ENCODE measurements at regions of chr20 and their contacts with region 1.

Region 1: GRCh38 chr20:39874049-39874888 is 814.8 kb downstream of the MAFB start:
- DNase-seq: peak; percentile 65
- CTCF ChIP-seq: peak; percentile 82

Region 2: GRCh38 chr20:39112178-39112743 is 762.0 kb before region 1 on chr20:
- CTCF ChIA-PET with region 1: interaction called, 12 read pairs
- POLR2A ChIA-PET with region 1: no interaction called
- DNase-seq: peak; percentile 77
- CTCF ChIP-seq: peak; percentile 57

Region 3: GRCh38 chr20:39270837-39271604 is 603.2 kb before region 1 on chr20:
- CTCF ChIA-PET with region 1: interaction called, 72 read pairs
- POLR2A ChIA-PET with region 1: no interaction called
- DNase-seq: no peak
- CTCF ChIP-seq: no peak

Region 4: GRCh38 chr20:39676857-39677391 is 197.3 kb before region 1 on chr20:
- CTCF ChIA-PET with region 1: interaction called, 37 read pairs
- POLR2A ChIA-PET with region 1: no interaction called
- DNase-seq: peak; percentile 28
- CTCF ChIP-seq: peak; percentile 21

Region 5: DNA sequence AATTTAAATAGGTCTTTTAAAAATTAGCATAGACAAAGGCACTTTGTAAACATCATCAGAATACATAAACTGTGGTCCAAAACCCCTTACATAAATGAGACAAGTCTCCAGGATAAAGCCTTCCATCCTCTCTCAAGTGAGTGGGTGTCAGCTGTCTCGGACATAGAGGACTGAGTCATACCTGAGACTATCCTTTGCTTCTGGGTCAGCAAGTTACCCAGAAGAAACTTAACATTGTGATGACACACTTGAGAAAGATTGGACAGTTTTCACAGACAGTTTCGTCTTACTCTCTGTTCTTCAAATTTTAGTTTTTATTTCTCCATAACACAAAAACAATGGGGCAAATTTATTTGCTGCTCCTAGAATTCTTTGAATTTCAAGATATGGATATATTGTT is 74.2 kb before region 1 on chr20:
- CTCF ChIA-PET with region 1: no interaction called
- POLR2A ChIA-PET with region 1: no interaction called
- DNase-seq: peak; percentile 42
- CTCF ChIP-seq: no peak

Region 6: GRCh38 chr20:39855799-39856198 is 18.5 kb before region 1 on chr20:
- CTCF ChIA-PET with region 1: interaction called, 31 read pairs
- POLR2A ChIA-PET with region 1: no interaction called
- DNase-seq: no peak
- CTCF ChIP-seq: no peak

Region 7: DNA sequence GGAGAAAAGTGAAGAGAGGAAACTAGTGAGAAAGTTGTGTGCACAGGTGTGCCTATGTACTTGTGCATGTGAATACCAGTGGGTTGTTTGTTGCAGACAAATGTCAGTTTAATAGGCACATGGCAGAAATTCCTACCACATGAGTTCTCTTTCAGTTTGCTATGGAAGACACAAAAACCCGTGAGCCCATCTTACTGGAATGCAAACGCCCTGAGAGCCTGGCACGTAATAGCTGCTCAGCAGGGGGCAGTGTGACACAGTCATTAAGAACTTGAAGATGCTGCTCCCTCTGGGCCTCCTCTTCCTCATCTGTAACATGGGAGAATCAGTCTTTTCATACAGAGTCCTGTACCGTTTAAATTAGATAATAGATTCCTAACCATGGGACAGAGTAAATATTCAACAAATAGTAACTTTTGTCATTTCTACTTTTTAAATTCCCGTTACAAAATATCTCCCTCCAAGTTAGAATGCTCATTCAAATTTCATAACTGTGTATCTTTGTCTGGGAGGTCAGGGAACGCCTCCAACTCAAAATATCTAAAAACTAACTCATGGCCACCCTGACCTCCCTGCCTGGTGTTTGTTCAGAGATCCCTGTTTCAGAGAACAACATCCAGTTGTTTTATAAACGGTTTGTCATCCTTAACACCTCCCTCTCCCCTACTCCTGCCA is 11.8 kb after region 1 on chr20:
- CTCF ChIA-PET with region 1: interaction called, 19 read pairs
- POLR2A ChIA-PET with region 1: no interaction called
- DNase-seq: peak; percentile 34
- CTCF ChIP-seq: peak; percentile 60

Region 8: DNA sequence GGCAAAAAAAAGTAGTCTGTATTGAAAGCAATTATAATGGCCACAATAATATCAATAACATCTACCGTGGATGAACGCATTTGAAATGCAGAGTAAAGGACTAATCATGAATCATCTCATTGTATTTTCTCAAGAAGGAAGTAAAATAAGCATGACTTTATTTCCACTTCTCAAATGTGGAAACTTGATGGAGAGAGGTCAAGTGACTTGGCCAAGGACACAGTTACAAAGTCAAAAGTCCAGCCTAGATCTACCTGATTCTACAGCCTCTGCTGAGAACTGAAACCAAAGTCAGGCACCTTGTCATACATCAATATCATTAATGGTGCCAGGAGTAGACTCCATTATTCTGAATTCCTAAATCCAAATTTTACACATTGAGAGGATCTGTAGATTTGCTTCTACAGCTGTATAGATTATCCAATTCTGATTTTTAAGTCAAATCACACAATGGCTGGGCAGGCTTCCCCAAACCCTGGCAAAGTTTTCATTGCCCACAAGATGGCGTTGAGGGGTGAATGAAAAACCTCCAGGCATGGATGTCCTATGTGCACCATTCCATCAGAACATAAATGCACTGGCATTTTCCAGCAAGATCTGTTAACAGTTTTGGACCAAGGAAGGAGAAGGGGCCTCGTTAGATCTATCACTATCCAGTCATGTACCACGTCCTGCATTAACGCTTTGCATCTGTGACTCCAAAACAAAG is 391.7 kb after region 1 on chr20:
- CTCF ChIA-PET with region 1: no interaction called
- POLR2A ChIA-PET with region 1: no interaction called
- DNase-seq: no peak
- CTCF ChIP-seq: no peak

Region 9: DNA sequence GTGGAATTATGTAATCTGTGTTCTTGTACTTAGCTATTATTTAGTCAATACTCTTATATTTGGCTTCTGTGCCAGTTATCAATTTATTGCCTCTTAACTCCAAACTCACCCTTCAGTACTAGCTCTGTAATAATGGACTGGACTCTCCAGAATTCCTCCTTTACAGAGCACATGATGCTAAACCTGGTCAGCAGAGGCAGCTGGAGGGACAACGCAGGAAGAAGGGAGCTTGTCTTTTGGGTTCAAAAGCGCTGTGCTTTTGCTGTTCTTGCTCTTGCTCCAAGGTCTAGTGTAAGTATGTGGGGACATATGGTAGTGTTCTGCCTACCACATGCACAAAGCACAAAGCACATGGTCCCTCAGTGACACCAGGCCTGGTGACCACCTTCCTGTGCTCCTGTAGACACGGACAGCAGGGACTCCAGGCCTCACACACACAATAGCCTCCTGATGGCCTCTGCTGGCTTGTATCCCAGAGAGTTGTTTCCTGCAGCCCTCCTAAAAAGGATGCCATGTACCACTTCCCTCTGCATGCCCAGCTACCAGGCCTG is 1697.8 kb after region 1 on chr20:
- CTCF ChIA-PET with region 1: no interaction called
- POLR2A ChIA-PET with region 1: no interaction called
- DNase-seq: no peak
- CTCF ChIP-seq: peak; percentile 11